ENCODE measurements at regions of chr15 and their contacts with region 1.

Region 1: GRCh38 chr15:39756806-39757522 is 25.7 kb downstream of the FSIP1 start:
- DNase-seq: peak; percentile 21
- H3K4me3 Mint-ChIP-seq: no peak overlapping the region
- H3K27ac Mint-ChIP-seq: no peak overlapping the region
- H3K4me1 Mint-ChIP-seq: no peaks in the 10 kb centered on the region
- H3K27me3 Mint-ChIP-seq: peaks cover 30% of the 10 kb centered on the region

Region 2: DNA sequence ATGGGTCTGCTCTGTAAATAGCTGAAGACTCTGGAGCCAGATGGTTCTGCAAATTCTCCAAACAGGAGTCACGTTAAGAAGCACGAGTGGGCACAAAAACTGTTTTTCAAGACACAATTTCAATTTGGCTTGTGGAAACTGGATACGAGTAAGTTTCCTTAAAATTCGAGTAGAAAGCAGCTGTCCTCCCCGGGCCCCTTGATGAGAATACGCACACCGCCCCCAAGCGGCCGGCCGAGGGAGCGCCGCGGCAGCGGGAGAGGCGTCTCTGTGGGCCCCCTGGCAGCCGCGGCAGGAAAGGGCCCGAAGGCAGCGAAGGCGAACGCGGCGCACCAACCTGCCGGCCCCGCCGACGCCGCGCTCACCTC is 176.9 kb before region 1 on chr15:
- CTCF ChIA-PET with region 1: interaction called, 146 read pairs
- DNase-seq: peak; percentile 90
- H3K4me3 Mint-ChIP-seq: peak overlapping the region; percentile 50
- H3K27ac Mint-ChIP-seq: no peak overlapping the region
- H3K4me1 Mint-ChIP-seq: peaks cover 16% of the 10 kb centered on the region
- H3K27me3 Mint-ChIP-seq: peaks cover 84% of the 10 kb centered on the region

Region 3: DNA sequence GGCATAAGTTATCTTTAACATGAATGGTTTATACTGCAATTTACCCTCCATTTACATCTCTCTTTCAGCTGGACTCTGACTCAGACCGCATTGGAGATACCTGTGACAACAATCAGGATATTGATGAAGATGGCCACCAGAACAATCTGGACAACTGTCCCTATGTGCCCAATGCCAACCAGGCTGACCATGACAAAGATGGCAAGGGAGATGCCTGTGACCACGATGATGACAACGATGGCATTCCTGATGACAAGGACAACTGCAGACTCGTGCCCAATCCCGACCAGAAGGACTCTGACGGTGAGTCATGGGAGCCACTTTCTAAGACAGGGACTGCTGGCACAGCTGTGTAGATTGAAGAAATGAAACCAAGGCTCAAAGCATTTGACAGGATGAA is 164.5 kb before region 1 on chr15:
- CTCF ChIA-PET with region 1: interaction called, 146 read pairs
- DNase-seq: no peak
- H3K4me3 Mint-ChIP-seq: no peak overlapping the region
- H3K27ac Mint-ChIP-seq: no peak overlapping the region
- H3K4me1 Mint-ChIP-seq: no peaks in the 10 kb centered on the region
- H3K27me3 Mint-ChIP-seq: peaks cover 26% of the 10 kb centered on the region

Region 4: GRCh38 chr15:39638041-39638440 is 118.9 kb before region 1 on chr15:
- CTCF ChIA-PET with region 1: no interaction called
- DNase-seq: no peak
- H3K4me3 Mint-ChIP-seq: no peak overlapping the region
- H3K27ac Mint-ChIP-seq: no peak overlapping the region
- H3K4me1 Mint-ChIP-seq: peaks cover 2% of the 10 kb centered on the region
- H3K27me3 Mint-ChIP-seq: peaks cover 22% of the 10 kb centered on the region

Region 5: GRCh38 chr15:39686000-39686613 is 70.9 kb before region 1 on chr15:
- CTCF ChIA-PET with region 1: interaction called, 74 read pairs
- DNase-seq: peak; percentile 51
- H3K4me3 Mint-ChIP-seq: no peak overlapping the region
- H3K27ac Mint-ChIP-seq: no peak overlapping the region
- H3K4me1 Mint-ChIP-seq: no peaks in the 10 kb centered on the region
- H3K27me3 Mint-ChIP-seq: peaks cover 9% of the 10 kb centered on the region

Region 6: DNA sequence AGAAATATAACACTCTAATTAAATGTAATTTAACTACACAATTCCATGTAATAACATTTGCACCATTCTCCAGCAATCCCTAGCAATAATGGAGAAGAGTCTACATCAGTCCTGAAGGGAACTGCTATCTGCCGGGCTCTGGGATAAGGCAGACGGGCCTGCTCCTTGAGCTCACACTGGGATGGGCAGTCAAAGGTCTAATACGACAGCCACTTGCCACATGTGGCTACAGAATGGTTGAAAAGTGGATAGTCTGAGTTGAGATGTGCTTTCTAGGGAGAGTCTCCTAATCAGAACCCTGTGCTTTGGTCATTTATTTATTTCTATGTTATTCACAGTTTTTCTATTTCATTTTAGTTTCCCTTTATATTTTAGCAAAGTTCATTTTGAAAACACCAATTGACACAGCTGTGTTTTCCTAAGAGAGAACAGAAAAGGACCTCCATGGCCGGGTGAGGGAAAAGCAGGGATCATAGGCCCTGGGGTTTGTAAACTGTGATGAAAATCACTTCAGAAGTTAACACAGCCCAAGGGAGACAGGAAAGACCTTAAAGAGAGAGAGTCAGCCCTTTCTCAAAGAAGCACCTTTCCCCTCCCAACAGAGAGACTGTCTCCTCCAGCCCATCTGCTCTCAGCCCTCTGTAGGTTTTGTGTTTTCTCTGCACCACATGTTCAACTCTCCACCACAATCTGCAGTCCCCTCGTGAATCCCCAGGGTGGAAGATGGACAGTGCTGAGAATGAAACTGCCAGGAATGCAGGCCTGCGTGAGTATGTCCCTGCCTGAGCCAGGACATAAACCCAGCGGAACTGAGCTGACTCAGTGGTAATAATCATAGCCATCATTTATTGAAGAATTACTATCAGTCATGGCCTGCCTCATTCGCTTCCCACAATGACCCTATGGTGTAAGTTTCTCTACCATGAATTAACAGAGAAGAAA is 14.1 kb after region 1 on chr15:
- CTCF ChIA-PET with region 1: interaction called, 13 read pairs
- DNase-seq: no peak
- H3K4me3 Mint-ChIP-seq: no peak overlapping the region
- H3K27ac Mint-ChIP-seq: peak overlapping the region; percentile 33
- H3K4me1 Mint-ChIP-seq: peaks cover 28% of the 10 kb centered on the region
- H3K27me3 Mint-ChIP-seq: peaks cover 4% of the 10 kb centered on the region